ENCODE measurements at regions of chr11 and their contacts with region 1.

Region 1: DNA sequence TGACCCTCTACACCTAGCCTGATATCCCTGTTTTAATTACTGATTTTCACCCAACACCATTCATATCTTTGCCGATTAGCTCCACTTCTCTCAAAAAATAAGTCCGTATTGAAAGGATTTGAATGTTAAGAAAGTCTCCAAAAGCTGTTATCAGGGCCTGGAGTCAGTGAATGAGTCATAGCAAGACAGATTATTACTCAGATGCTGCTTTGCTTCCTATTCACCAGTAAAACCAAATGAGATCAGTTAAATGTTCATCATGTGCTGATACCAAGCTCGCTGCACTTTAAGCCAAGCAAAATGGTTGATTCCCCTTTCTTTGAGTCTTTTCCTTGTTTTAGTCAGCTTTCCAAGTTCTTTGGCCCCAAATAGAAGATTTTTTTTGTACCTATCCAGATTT is 228.4 kb downstream of the FAT3 start:
- DNase-seq: peak; percentile 60
- H3K4me3 ChIP-seq: no peak overlapping the region
- H3K27ac ChIP-seq: no peak overlapping the region
- H3K4me1 ChIP-seq: no peaks in the 10 kb centered on the region
- H3K27me3 ChIP-seq: no peaks in the 10 kb centered on the region
- CTCF ChIP-seq: no peak

Region 2: DNA sequence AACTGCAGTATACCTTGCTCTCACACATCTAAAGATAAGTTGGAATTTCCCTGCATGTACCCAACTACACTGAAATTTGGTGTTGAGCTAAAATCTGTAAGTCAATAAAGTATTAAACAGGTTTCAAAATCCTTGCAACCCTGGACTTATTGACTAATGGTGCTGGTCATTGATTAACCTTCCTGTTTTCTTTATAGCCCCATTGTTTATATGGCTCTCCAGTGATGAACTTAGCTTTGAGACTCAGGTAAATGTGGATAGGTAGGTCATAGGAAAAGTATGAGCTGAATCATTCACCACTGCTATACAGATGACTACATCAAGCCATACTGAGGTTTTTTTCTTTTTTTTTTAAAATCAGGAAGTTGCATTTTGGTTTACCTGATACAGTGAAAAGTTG is 95.7 kb before region 1 on chr11:
- CTCF ChIA-PET with region 1: no interaction called
- dilution Hi-C with region 1: no loop called
- in situ Hi-C with region 1: loop called in 1 of 2 experiments (anchors 25 kb)
- intact Hi-C with region 1: no loop called
- DNase-seq: peak; percentile 77
- H3K4me3 ChIP-seq: no peak overlapping the region
- H3K27ac ChIP-seq: peak overlapping the region; percentile 11
- H3K4me1 ChIP-seq: peaks cover 7% of the 10 kb centered on the region
- H3K27me3 ChIP-seq: no peaks in the 10 kb centered on the region
- CTCF ChIP-seq: no peak

Measured in mammary epithelial cell (primary cell).